MCF 10A (cell line): ENCODE measurements at regions of chr6 and their contacts with region 1.

Region 1: DNA sequence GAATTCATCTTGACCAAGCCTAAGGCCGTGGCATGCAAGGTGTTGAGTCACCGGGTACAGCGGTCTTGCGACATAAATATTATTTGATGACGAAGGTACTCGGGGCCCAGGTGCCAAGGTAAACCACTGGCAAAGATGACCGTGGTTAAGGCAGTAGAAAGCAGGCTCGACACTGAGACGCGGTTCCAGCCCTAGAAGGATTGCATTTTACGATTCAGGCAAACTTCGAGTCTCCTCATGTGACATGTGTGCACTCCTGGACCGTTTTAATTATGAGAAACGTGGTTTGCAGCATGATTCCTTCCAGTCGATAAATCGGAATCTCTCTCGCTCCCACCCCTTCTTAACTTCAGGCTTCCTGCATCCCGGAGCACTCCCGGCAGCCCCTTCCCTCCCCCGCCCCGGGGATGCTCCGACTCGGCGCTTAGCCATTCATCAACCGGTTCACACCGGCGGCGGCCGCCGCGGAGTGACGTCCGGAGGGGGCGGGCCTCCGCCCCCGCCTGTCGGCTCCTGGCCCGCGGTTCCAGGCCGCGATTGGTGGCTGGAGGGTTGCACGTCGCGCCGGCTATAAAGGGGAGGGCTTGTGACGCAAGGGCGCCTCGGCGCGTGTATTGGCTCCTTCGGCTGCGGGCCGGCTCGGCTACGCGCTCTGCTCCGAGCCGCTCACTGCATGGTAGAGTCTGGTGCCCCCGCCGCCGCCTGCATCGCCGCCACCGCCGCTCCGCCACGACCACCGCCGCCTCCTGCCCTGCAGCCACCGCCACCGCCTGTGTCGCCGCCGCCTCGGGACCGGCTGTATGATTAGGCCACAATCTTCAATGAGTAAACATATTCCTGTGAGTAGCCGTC is at the starts of genes LOC128125822 and PTP4A1:
- DNase-seq: peak; percentile 98
- H3K4me3 Mint-ChIP-seq: peak within 1 kb of the TSS; percentile 88
- H3K27ac Mint-ChIP-seq: peak within 1 kb of the TSS; percentile 96
- H3K4me1 Mint-ChIP-seq: peaks cover 8% of the 10 kb centered on the region
- H3K27me3 Mint-ChIP-seq: no peaks in the 10 kb centered on the region
- CTCF ChIP-seq: no peak
- total RNA-seq, gene PTP4A1: 239 and 382 TPM in 2 replicates

Region 2: GRCh38 chr6:63307581-63308246 is 264.4 kb before region 1 on chr6:
- CTCF ChIA-PET with region 1: no interaction called
- POLR2A ChIA-PET with region 1: no interaction called
- intact Hi-C with region 1: loop called (anchors 5 kb)
- DNase-seq: peak; percentile 74
- H3K4me3 Mint-ChIP-seq: no peak overlapping the region
- H3K27ac Mint-ChIP-seq: no peak overlapping the region
- H3K4me1 Mint-ChIP-seq: peaks cover 6% of the 10 kb centered on the region
- H3K27me3 Mint-ChIP-seq: no peaks in the 10 kb centered on the region
- CTCF ChIP-seq: peak; percentile 50

Region 3: GRCh38 chr6:63352587-63353285 is 219.4 kb before region 1 on chr6:
- CTCF ChIA-PET with region 1: interaction called, 35 read pairs
- POLR2A ChIA-PET with region 1: interaction called, 64 read pairs
- intact Hi-C with region 1: loop called (anchors 1 kb)
- DNase-seq: peak; percentile 67
- H3K4me3 Mint-ChIP-seq: no peak overlapping the region
- H3K27ac Mint-ChIP-seq: no peak overlapping the region
- H3K4me1 Mint-ChIP-seq: peaks cover 8% of the 10 kb centered on the region
- H3K27me3 Mint-ChIP-seq: no peaks in the 10 kb centered on the region
- CTCF ChIP-seq: peak; percentile 72

Region 4: DNA sequence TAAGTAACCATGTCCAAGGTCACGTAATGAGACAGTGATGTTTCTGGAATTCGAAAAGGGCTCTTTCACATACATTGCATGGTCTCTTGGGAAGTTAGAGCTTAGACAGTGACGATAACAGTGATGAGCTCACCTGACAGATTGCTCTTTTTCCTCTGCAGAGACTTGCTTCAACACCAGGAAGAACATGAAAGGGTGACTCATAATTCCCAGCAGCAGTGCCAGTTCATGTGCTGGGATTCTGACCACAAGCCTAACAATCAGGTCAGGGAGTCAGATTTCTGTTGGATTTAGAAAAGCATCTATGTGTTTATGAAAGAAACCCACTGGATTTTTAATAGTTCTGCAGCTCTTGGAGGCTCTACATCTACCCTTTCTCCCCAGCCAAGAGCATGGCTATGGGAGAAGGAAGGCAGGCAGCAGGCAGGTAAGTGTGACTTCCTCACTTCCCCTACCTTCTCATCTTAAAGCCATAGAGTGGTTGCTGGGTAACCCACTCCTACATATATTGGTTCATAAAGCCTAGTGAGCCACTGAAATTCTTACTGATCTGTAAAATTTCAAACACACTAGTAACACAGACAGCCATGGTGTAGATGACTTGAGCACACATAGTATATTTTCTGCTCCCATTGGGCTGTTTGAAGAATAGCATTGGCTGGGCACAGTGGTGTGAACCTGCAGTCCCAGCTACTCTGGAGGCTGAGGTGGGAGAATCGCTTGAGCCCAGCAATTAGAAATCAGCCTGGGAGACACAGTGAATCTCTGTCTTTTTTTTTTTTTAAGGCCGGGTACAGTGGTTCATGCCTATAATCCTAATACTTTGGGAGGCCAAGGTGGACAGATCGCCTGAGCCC is 44.2 kb before region 1 on chr6:
- CTCF ChIA-PET with region 1: interaction called, 11 read pairs
- POLR2A ChIA-PET with region 1: interaction called, 36 read pairs
- intact Hi-C with region 1: loop called (anchors 1 kb)
- DNase-seq: peak; percentile 98
- H3K4me3 Mint-ChIP-seq: peak overlapping the region; percentile 33
- H3K27ac Mint-ChIP-seq: peak overlapping the region; percentile 84
- H3K4me1 Mint-ChIP-seq: peaks cover 26% of the 10 kb centered on the region
- H3K27me3 Mint-ChIP-seq: no peaks in the 10 kb centered on the region
- CTCF ChIP-seq: no peak

Region 5: GRCh38 chr6:63560801-63561672 is 11.1 kb before region 1 on chr6:
- CTCF ChIA-PET with region 1: interaction called, 4 read pairs
- POLR2A ChIA-PET with region 1: interaction called, 24 read pairs
- intact Hi-C with region 1: no loop called
- DNase-seq: peak; percentile 43
- H3K4me3 Mint-ChIP-seq: no peak overlapping the region
- H3K27ac Mint-ChIP-seq: no peak overlapping the region
- H3K4me1 Mint-ChIP-seq: peaks cover 32% of the 10 kb centered on the region
- H3K27me3 Mint-ChIP-seq: no peaks in the 10 kb centered on the region
- CTCF ChIP-seq: no peak

Region 6: DNA sequence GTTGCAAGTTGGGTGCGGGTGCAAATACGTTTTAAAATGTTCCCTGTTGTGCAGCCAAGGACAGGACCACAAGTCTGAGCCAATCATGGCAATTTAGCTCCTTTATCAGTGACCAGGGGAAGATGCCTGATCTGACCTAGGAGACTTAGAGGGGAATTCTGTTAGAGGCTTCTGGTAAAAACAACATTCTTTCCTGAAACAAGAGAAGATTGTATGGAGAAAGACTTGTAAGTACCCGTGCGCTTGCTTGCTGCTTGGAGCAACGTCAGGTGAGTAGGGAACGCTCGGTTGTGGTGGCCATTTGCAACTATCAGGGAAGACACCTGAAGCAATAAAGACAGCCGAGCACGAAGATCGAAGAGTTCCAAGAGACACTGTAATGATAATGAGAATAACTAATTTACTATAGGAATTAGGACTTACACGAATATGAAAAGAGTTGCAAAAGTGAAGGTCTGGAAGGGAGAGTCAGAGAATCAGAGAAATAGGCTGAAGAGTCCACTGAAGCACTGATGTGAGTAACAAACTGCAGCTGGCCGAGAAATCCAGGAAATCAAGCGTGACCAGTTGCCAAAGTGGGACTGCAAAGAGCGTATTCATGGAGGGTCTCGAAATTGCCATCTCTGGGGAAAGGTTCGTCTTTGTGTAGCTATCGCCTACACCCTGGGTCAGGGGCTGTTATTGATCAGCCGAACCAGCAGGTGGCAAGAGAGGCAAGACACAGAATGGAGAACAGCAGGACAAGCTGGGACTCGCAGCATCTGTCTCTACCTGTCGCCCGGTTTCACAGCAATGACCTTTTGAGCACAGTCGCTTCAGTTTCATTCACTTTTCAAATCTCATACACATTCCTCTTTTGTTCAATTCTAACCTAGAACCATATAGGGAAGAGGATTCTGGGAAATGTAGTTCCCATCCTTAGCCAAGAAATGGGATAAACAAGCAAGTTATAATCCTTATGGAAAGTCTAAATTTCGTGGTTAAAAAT is 26.2 kb after region 1 on chr6:
- CTCF ChIA-PET with region 1: interaction called, 15 read pairs
- POLR2A ChIA-PET with region 1: interaction called, 31 read pairs
- intact Hi-C with region 1: no loop called
- DNase-seq: peak; percentile 84
- H3K4me3 Mint-ChIP-seq: peak overlapping the region; percentile 72
- H3K27ac Mint-ChIP-seq: peak overlapping the region; percentile 4
- H3K4me1 Mint-ChIP-seq: peaks cover 7% of the 10 kb centered on the region
- H3K27me3 Mint-ChIP-seq: no peaks in the 10 kb centered on the region
- CTCF ChIP-seq: peak; percentile 79

Region 7: GRCh38 chr6:63764318-63764916 is 192.3 kb after region 1 on chr6:
- CTCF ChIA-PET with region 1: interaction called, 6 read pairs
- POLR2A ChIA-PET with region 1: interaction called, 5 read pairs
- intact Hi-C with region 1: loop called (anchors 1 kb)
- DNase-seq: peak; percentile 62
- H3K4me3 Mint-ChIP-seq: no peak overlapping the region
- H3K27ac Mint-ChIP-seq: no peak overlapping the region
- H3K4me1 Mint-ChIP-seq: no peaks in the 10 kb centered on the region
- H3K27me3 Mint-ChIP-seq: no peaks in the 10 kb centered on the region
- CTCF ChIP-seq: peak; percentile 51

Region 8: GRCh38 chr6:63904650-63905248 is 332.6 kb after region 1 on chr6:
- CTCF ChIA-PET with region 1: no interaction called
- POLR2A ChIA-PET with region 1: no interaction called
- intact Hi-C with region 1: no loop called
- DNase-seq: peak; percentile 35
- H3K4me3 Mint-ChIP-seq: no peak overlapping the region
- H3K27ac Mint-ChIP-seq: no peak overlapping the region
- H3K4me1 Mint-ChIP-seq: peaks cover 12% of the 10 kb centered on the region
- H3K27me3 Mint-ChIP-seq: no peaks in the 10 kb centered on the region
- CTCF ChIP-seq: no peak